KBM-7 (cell line): ENCODE measurements at regions of chr6 and their contacts with region 1.

Region 1: DNA sequence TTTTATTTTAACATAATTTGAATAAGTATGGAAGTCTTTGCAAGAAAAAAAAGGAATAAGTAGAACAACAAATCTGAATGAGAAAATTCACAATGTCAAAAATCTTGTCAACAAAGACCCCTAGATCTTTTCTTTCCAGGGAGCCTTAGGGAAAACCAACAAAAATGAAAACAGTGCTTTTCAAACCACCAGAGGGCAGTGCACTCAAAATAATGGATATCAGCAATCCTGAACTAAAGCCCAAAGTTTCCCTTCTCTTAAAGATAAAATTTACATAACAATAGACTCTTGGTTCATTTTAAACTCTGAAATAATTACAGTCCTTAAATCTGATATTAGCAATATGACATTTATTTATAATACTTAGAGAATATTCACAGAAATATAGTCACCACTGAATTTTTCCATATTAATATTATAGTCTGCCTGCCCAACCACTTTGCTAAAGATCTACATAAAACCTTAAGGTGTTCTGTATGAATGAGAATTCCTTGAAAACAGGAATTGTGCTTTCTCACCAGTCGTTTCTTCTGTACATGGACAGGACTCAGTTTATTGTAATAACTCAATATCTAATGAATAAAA is 105.3 kb upstream of the BMP5 start:
- DNase-seq: peak; percentile 49

Region 2: DNA sequence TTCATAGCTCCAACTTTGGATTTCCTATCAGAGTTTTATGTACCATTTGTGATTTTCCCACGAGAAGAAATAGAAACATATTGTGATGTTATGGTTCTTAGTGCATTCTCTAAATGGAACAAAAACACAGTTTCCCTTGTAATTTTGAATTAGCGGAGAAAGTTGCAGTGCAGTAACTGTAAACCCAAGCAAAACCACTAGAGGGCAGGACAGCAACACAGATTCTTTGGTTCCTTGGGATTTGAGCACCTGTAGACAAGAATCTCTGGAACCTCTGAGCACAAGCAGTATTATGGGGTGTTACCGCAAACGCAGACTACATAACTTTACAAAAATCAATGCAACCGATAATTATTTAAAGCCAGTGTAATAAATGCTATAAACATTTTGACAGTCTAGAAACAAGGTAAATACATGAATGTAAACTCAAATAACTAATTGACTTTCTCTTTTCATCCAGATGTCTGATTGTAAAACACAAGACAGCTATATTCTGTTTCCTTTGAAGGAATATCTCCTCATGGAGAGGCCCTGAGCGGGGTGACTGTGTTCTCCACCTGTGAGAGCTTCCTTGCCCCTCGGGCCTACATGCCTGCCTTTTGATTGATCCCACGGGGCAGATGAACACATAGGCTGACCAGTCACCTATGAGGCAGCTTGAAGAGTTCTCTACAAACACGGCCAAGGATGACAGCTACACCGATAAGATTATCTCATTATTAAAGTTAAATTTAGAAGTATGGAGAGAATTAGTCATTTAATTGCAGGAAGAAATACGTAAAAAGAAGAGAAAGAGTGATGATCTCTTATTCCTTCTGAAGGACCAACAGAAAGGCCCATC is 334.2 kb after region 1 on chr6:
- in situ Hi-C with region 1: loop called (anchors 25 kb)
- DNase-seq: peak; percentile 61